Naive thymus-derived CD4-positive, alpha-beta T cell (primary cell): ENCODE measurements at regions of chr4 and their contacts with region 1.

Region 1: GRCh38 chr4:36285784-36286480 is 4.5 kb downstream of the DTHD1 start:
- DNase-seq: peak in 8 of 9 donors; percentile 15 to 62 (median 47)
- ATAC-seq: peak; percentile 93
- H3K4me3 ChIP-seq: peak overlapping the region; percentile 22
- H3K4me3 Mint-ChIP-seq: peak overlapping the region in 7 of 10 donors; percentile 25 to 80 (median 38)
- H3K27ac ChIP-seq: peak overlapping the region; percentile 8
- H3K27ac Mint-ChIP-seq: peak overlapping the region in 8 of 9 donors; percentile 38 to 96 (median 71)
- H3K4me1 ChIP-seq: peaks cover 6 to 28% of the 10 kb centered on the region in 2 donors
- H3K4me1 Mint-ChIP-seq: peaks cover 5 to 65% (median 11%) of the 10 kb centered on the region in 7 donors
- H3K27me3 ChIP-seq: no peaks in the 10 kb centered on the region
- H3K27me3 Mint-ChIP-seq: no peaks in the 10 kb centered on the region

Region 2: DNA sequence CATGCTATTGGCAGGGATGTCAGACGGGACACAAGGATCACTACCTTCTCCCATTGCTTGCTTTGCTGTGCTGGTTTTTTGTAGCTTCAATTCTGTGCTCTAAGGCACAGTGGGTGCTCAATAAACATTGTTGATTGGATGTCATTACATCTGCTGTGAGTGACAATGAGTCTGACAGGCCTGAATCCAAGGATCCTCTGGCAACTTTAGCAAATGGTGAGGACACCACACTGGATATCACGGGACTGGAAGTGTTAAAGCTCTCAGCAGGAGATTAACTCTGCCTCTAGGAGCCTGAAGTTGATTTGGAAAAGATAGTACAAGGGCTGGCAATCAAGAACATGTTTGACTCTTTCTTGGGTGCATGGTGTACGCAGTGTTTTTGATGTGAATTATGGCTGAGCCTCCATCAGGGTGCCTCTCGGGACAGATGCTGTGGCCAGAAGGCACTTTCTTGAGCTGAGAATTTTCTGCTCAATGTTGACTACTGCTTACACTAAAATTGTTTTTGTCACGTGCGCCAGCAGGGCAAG is 259.5 kb before region 1 on chr4:
- CTCF ChIA-PET with region 1: no interaction called
- POLR2A ChIA-PET with region 1: no interaction called
- intact Hi-C with region 1: no loop called
- DNase-seq: no peak
- ATAC-seq: no peak
- H3K4me3 ChIP-seq: no peak overlapping the region
- H3K4me3 Mint-ChIP-seq: no peak overlapping the region
- H3K27ac ChIP-seq: no peak overlapping the region
- H3K27ac Mint-ChIP-seq: no peak overlapping the region
- H3K4me1 ChIP-seq: no peaks in the 10 kb centered on the region
- H3K4me1 Mint-ChIP-seq: no peaks in the 10 kb centered on the region
- H3K27me3 ChIP-seq: no peaks in the 10 kb centered on the region
- H3K27me3 Mint-ChIP-seq: no peaks in the 10 kb centered on the region

Region 3: DNA sequence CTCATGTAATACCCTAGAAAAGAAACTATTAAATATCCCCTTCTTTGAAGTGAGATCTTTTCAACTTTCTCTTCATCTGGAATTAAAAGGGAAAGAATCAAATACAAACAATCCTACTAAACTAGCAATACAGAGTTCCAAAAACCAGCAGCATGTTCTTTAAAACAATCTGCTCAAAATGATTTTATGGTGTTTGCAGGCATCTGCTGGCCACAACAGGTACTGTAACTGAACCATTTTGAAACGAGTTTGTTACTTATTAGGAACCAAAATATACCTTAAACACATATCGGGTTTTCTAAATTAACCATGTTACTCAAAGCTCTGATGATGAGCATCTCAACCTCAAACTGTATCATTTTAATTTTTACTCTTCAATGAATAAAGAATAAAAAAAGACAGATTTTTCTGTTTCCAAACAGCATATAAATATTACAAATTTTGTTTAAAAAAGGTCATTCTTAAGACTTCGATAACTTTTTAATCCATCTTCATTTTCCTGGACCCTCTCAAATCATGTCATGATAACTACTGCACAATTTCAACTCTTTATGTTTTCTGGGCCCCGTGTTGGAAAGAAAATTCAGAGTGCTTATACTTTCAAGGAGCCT is 98.1 kb before region 1 on chr4:
- CTCF ChIA-PET with region 1: no interaction called
- POLR2A ChIA-PET with region 1: no interaction called
- intact Hi-C with region 1: loop called (anchors 1 to 2 kb)
- DNase-seq: peak in 3 of 9 donors; percentile 4 to 14 (median 7)
- ATAC-seq: no peak
- H3K4me3 ChIP-seq: no peak overlapping the region
- H3K4me3 Mint-ChIP-seq: no peak overlapping the region
- H3K27ac ChIP-seq: no peak overlapping the region
- H3K27ac Mint-ChIP-seq: no peak overlapping the region
- H3K4me1 ChIP-seq: peaks cover 5 to 52% of the 10 kb centered on the region in 2 donors
- H3K4me1 Mint-ChIP-seq: peaks cover 15 to 33% (median 21%) of the 10 kb centered on the region in 7 donors
- H3K27me3 ChIP-seq: no peaks in the 10 kb centered on the region
- H3K27me3 Mint-ChIP-seq: no peaks in the 10 kb centered on the region

Region 4: DNA sequence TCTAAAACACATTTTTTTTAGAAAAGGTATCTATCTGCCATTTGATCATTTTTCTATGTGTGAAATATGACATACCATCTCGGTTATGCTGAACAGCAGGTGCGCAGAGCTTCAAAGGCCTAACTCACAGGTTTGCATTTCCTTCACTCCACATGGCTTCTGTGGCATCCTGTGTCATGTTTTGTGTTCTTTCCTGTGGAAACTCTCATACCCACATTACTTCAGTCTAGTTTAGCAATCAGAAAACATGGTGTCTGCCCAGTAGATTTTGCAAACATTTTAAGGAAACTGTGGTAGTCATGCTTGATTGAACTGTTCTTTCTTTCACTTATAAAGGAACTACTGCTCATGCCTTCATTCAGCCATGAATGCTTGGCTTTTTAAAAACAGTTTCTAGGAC is 30.4 kb before region 1 on chr4:
- CTCF ChIA-PET with region 1: interaction called, 3 read pairs
- POLR2A ChIA-PET with region 1: no interaction called
- intact Hi-C with region 1: loop called (anchors 1 kb)
- DNase-seq: peak in 8 of 9 donors; percentile 46 to 90 (median 86)
- ATAC-seq: peak; percentile 98
- H3K4me3 ChIP-seq: no peak overlapping the region
- H3K4me3 Mint-ChIP-seq: peak overlapping the region; percentile 22 to 85 (median 68)
- H3K27ac ChIP-seq: peak overlapping the region; percentile 53
- H3K27ac Mint-ChIP-seq: peak overlapping the region; percentile 74 to 96 (median 86)
- H3K4me1 ChIP-seq: peaks cover 10 to 49% of the 10 kb centered on the region in 2 donors
- H3K4me1 Mint-ChIP-seq: peaks cover 22 to 40% (median 34%) of the 10 kb centered on the region in 7 donors
- H3K27me3 ChIP-seq: no peaks in the 10 kb centered on the region
- H3K27me3 Mint-ChIP-seq: peaks cover 0 to 4% (median 0%) of the 10 kb centered on the region in 5 donors

Region 5: GRCh38 chr4:36322921-36323354 is 37.0 kb after region 1 on chr4:
- CTCF ChIA-PET with region 1: no interaction called
- POLR2A ChIA-PET with region 1: no interaction called
- intact Hi-C with region 1: loop called (anchors 1 to 2 kb)
- DNase-seq: peak in 8 of 9 donors; percentile 37 to 81 (median 66)
- ATAC-seq: peak; percentile 86
- H3K4me3 ChIP-seq: peak overlapping the region; percentile 6
- H3K4me3 Mint-ChIP-seq: peak overlapping the region in 9 of 10 donors; percentile 51 to 79 (median 65)
- H3K27ac ChIP-seq: no peak overlapping the region
- H3K27ac Mint-ChIP-seq: peak overlapping the region; percentile 44 to 87 (median 72)
- H3K4me1 ChIP-seq: peaks cover 24 to 37% of the 10 kb centered on the region in 2 donors
- H3K4me1 Mint-ChIP-seq: peaks cover 32 to 76% (median 41%) of the 10 kb centered on the region in 7 donors
- H3K27me3 ChIP-seq: no peaks in the 10 kb centered on the region
- H3K27me3 Mint-ChIP-seq: no peaks in the 10 kb centered on the region

Region 6: DNA sequence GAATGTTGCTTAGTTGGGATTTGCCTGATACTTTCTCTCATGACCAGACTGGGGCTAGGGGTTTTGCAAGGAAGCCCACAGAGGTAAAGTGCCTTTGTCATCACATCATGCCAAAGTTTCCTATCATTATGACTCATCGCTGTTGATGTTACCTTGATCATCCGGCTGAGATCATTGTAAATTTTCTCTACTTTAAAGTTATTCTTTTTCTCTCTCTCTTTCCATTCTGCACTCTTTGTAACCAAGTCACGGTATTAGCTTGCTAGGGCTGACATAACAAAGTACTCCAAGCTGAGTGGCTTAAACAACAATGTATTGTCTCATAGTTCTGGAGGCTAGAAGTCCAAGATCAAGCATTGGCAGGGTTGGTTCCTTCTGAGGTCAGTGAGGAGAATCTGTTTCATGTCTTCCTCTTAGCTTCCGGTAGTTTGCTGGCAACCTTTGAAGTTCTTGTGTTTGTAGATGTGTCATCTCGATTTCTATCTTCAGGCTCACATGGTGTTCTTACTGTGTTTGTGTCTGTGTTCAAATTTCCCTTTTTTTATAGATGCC is 108.5 kb after region 1 on chr4:
- CTCF ChIA-PET with region 1: no interaction called
- POLR2A ChIA-PET with region 1: interaction called, 3 read pairs
- intact Hi-C with region 1: loop called in 1 of 2 experiments (anchors 1 kb)
- DNase-seq: peak in 8 of 9 donors; percentile 33 to 84 (median 71)
- ATAC-seq: peak; percentile 92
- H3K4me3 ChIP-seq: no peak overlapping the region
- H3K4me3 Mint-ChIP-seq: peak overlapping the region in 6 of 10 donors; percentile 27 to 76 (median 50)
- H3K27ac ChIP-seq: no peak overlapping the region
- H3K27ac Mint-ChIP-seq: peak overlapping the region; percentile 83 to 96 (median 88)
- H3K4me1 ChIP-seq: peaks cover 5 to 11% of the 10 kb centered on the region in 2 donors
- H3K4me1 Mint-ChIP-seq: peaks cover 0 to 24% (median 15%) of the 10 kb centered on the region in 7 donors
- H3K27me3 ChIP-seq: no peaks in the 10 kb centered on the region
- H3K27me3 Mint-ChIP-seq: peaks cover 0 to 14% (median 0%) of the 10 kb centered on the region in 5 donors

Region 7: DNA sequence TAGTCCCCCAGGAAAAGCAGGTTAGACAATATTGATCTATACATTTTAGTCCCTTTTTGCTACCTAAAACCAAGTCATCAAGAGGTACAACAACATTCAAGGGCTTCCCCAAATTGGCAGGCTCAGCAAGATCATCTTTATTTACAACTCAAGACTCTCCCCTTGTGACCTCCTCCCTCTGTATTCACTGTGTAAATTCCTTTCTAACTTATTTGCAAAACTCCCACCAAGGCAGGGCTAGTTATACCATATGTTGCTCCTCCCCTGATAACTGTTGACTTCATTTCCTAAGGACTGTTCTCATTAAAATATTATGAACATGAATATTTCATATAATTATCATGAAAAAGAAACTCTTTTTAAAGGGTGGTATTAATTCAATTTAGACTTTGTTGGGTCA is 271.1 kb after region 1 on chr4:
- CTCF ChIA-PET with region 1: no interaction called
- POLR2A ChIA-PET with region 1: no interaction called
- intact Hi-C with region 1: no loop called
- DNase-seq: no peak
- ATAC-seq: no peak
- H3K4me3 ChIP-seq: no peak overlapping the region
- H3K4me3 Mint-ChIP-seq: no peak overlapping the region
- H3K27ac ChIP-seq: no peak overlapping the region
- H3K27ac Mint-ChIP-seq: no peak overlapping the region
- H3K4me1 ChIP-seq: no peaks in the 10 kb centered on the region
- H3K4me1 Mint-ChIP-seq: peaks cover 0 to 14% (median 2%) of the 10 kb centered on the region in 7 donors
- H3K27me3 ChIP-seq: no peaks in the 10 kb centered on the region
- H3K27me3 Mint-ChIP-seq: peaks cover 0 to 10% (median 3%) of the 10 kb centered on the region in 5 donors

Region 8: DNA sequence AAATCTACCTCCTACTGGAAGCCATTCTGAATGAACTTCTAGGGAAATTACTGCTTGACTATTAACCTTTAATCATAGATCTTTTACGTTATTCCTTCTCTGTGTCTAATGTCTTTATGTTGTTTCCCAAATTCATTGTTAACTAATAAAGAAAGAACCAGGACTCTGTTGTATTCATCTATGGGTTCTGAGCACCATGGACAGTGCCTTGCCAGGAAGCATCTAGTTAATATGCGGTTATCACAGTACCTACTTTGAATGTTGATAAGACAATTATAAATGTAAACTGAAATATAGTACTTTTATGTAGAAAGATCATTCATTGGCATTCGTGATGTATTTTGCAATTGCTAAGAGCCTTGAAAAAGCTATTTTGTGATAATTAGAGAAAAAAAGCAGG is 982.4 kb after region 1 on chr4:
- CTCF ChIA-PET with region 1: no interaction called
- POLR2A ChIA-PET with region 1: no interaction called
- intact Hi-C with region 1: no loop called
- DNase-seq: no peak
- ATAC-seq: no peak
- H3K4me3 ChIP-seq: no peak overlapping the region
- H3K4me3 Mint-ChIP-seq: no peak overlapping the region
- H3K27ac ChIP-seq: no peak overlapping the region
- H3K27ac Mint-ChIP-seq: no peak overlapping the region
- H3K4me1 ChIP-seq: no peaks in the 10 kb centered on the region
- H3K4me1 Mint-ChIP-seq: no peaks in the 10 kb centered on the region
- H3K27me3 ChIP-seq: no peaks in the 10 kb centered on the region
- H3K27me3 Mint-ChIP-seq: peaks cover 0 to 29% (median 16%) of the 10 kb centered on the region in 5 donors